Activated naive CD4-positive, alpha-beta T cell treated with anti-CD3 and anti-CD28 coated beads, Interleukin-2, amount 10 ng/mL, durations not matched to agents 7 days and 5 days (primary cell): ENCODE measurements at regions of chr2 and their contacts with region 1.

Region 1: GRCh38 chr2:232854082-232854481 is 16.0 kb upstream of the SNORC start:
- DNase-seq: no peak
- H3K4me3 Mint-ChIP-seq: no peak overlapping the region
- H3K27ac Mint-ChIP-seq: no peak overlapping the region
- H3K4me1 Mint-ChIP-seq: no peaks in the 10 kb centered on the region
- H3K27me3 Mint-ChIP-seq: no peaks in the 10 kb centered on the region

Region 2: DNA sequence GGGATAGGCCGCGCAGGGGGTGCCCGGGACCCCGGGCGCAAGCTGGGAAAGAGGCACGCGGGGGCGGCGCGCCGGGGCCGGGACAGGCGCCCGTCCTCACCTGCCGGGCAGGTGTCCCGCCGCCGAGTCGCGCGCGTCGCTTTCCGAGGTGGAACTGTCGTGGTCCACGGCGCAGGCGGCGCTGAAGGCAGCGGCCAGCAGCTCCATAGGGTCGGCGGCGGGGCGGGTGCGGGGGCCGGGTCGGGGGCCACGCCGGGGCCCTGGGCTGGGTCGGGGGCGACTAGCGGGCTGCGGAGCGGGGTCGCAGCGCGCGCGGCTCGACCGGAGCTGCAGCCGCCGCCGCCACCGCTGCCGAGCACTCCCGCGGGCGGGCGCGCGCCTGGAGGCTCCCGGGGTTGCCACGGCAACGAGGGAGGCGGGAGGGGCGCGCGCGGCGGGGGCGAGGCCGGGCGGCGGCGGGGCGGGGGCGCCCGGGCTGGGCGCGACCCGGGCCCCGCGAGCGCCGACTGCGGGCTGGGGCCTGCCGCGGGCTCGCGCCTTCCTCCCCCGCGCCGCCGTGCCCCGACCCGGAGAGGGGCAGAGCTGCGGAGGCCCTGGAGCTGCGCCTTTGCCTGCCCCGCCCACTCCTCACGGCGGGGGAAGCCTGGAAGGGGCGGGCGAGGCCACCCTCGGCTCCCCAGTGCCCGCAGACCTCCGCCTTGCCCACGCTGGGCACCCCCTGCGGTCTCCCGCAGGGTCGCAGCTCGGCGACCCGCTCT is 73.9 kb after region 1 on chr2:
- CTCF ChIA-PET with region 1: no interaction called
- DNase-seq: no peak
- H3K4me3 Mint-ChIP-seq: no peak overlapping the region
- H3K27ac Mint-ChIP-seq: no peak overlapping the region
- H3K4me1 Mint-ChIP-seq: peaks cover 7% of the 10 kb centered on the region
- H3K27me3 Mint-ChIP-seq: peaks cover 87% of the 10 kb centered on the region

Region 3: GRCh38 chr2:233251306-233252116 is 397.4 kb after region 1 on chr2 and contains the start of gene ATG16L1:
- CTCF ChIA-PET with region 1: interaction called, 11 read pairs
- DNase-seq: peak; percentile 97
- H3K4me3 Mint-ChIP-seq: peak within 1 kb of the TSS; percentile 86
- H3K27ac Mint-ChIP-seq: peak within 1 kb of the TSS; percentile 96
- H3K4me1 Mint-ChIP-seq: peaks cover 76% of the 10 kb centered on the region
- H3K27me3 Mint-ChIP-seq: no peaks in the 10 kb centered on the region